GM12878 (cell line): ENCODE measurements at regions of chr17 and their contacts with region 1.

Region 1: DNA sequence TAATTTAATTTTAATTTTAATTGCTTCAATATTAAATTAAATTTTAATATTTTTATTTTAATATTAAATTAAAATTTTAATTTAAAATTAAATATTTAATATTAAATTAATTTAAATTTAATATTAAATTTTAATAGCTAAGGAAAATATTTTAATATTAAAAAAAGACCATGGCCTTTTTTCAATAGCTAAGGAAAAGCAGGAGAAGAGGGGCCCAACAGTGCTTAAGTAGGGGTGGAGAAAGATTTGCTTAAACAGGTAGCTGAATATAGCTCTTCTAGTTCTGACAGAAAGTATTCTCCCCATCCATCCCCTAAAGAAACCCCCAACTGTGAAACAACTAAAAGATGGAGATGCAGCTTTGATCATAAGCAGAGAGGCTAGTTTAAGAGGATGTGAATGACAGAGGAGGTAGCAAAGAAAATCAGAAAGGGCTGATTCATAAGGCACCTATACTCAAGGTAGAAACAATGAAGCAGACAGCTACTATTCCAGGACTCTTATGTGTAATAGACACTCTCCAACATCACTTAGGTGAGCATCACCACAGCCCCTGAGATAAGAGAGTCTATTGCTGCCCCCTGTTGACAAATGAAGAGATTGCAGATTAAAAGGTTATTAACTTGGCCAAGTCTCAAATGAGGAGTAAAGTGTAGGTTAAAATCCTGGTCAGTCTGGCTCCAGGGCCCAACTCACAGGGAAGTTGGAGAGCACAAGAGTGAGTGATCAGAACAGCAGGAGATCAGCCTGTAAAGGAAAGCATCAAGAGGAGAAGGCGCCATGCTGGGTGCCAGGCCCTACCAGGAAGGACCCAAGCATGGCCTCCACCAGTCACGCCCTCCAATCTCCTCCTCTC is 7.8 kb upstream of the RNASEK start:
- DNase-seq: peak; percentile 26
- ATAC-seq: peak; percentile 93
- H3K4me3 ChIP-seq: no peak overlapping the region
- H3K27ac ChIP-seq: no peak overlapping the region
- H3K4me1 ChIP-seq: no peaks in the 10 kb centered on the region
- H3K27me3 ChIP-seq: no peaks in the 10 kb centered on the region
- CTCF ChIP-seq: peak; percentile 56 to 75 (median 73); a peak in 5 of 6 replicates
- EP300 ChIP-seq: no peak
- POLR2A ChIP-seq: no peak
- RAD21 ChIP-seq: peak; percentile 89

Region 2: GRCh38 chr17:6666077-6666521 is 338.5 kb before region 1 on chr17:
- CTCF ChIA-PET with region 1: interaction called, 15 read pairs
- POLR2A ChIA-PET with region 1: interaction called, 4 read pairs
- RAD21 ChIA-PET with region 1: interaction called, 17 read pairs
- SMC1A ChIA-PET with region 1: interaction called, 6 read pairs
- in situ Hi-C with region 1: no loop called
- intact Hi-C with region 1: loop called (anchors 2 kb)
- DNase-seq: no peak
- ATAC-seq: peak; percentile 96
- H3K4me3 ChIP-seq: no peak overlapping the region
- H3K27ac ChIP-seq: no peak overlapping the region
- H3K4me1 ChIP-seq: peaks cover 4% of the 10 kb centered on the region
- H3K27me3 ChIP-seq: no peaks in the 10 kb centered on the region
- CTCF ChIP-seq: peak; percentile 86 to 96 (median 92)
- EP300 ChIP-seq: no peak
- POLR2A ChIP-seq: no peak
- RAD21 ChIP-seq: peak; percentile 98

Region 3: GRCh38 chr17:6919158-6919557 is 85.5 kb before region 1 on chr17:
- CTCF ChIA-PET with region 1: interaction called, 237 read pairs
- POLR2A ChIA-PET with region 1: interaction called, 3 read pairs
- RAD21 ChIA-PET with region 1: interaction called, 61 read pairs
- SMC1A ChIA-PET with region 1: interaction called, 67 read pairs
- in situ Hi-C with region 1: loop called (anchors 5 kb)
- intact Hi-C with region 1: no loop called
- DNase-seq: no peak
- ATAC-seq: no peak
- H3K4me3 ChIP-seq: no peak overlapping the region
- H3K27ac ChIP-seq: no peak overlapping the region
- H3K4me1 ChIP-seq: peaks cover 2% of the 10 kb centered on the region; the same call in 1 of the 2 replicates
- H3K27me3 ChIP-seq: no peaks in the 10 kb centered on the region
- CTCF ChIP-seq: no peak
- EP300 ChIP-seq: no peak
- POLR2A ChIP-seq: no peak
- RAD21 ChIP-seq: no peak

Region 4: DNA sequence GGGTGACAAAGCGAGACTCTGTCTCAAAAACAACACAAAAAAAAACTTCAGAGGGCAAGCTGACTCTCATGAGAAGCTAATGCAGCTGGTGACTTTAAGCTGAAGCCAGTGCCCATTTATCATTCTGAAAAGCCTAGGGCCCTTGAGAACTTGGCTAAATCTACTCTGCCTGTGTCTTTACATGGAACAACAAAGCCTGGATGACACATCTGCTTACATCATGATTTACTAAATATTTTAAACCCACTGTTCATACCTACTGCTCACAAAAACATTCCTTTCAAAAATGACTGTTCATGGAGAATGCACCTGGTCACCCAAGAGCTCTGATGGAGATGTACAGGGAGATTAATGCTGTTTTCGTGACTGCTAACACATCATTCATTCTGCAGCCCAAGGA is 14.8 kb before region 1 on chr17:
- CTCF ChIA-PET with region 1: interaction called, 17 read pairs
- POLR2A ChIA-PET with region 1: no interaction called
- RAD21 ChIA-PET with region 1: no interaction called
- SMC1A ChIA-PET with region 1: interaction called, 5 read pairs
- in situ Hi-C with region 1: no loop called
- intact Hi-C with region 1: no loop called
- DNase-seq: no peak
- ATAC-seq: no peak
- H3K4me3 ChIP-seq: no peak overlapping the region
- H3K27ac ChIP-seq: no peak overlapping the region
- H3K4me1 ChIP-seq: no peaks in the 10 kb centered on the region
- H3K27me3 ChIP-seq: no peaks in the 10 kb centered on the region
- CTCF ChIP-seq: no peak
- EP300 ChIP-seq: no peak
- POLR2A ChIP-seq: no peak
- RAD21 ChIP-seq: no peak

Region 5: GRCh38 chr17:7136266-7136877 is 131.7 kb after region 1 on chr17:
- CTCF ChIA-PET with region 1: interaction called, 12 read pairs
- POLR2A ChIA-PET with region 1: no interaction called
- RAD21 ChIA-PET with region 1: interaction called, 3 read pairs
- SMC1A ChIA-PET with region 1: interaction called, 3 read pairs
- in situ Hi-C with region 1: no loop called
- intact Hi-C with region 1: no loop called
- DNase-seq: peak; percentile 33
- ATAC-seq: no peak
- H3K4me3 ChIP-seq: no peak overlapping the region
- H3K27ac ChIP-seq: no peak overlapping the region
- H3K4me1 ChIP-seq: peaks cover 18% of the 10 kb centered on the region
- H3K27me3 ChIP-seq: peaks cover 0 to 3% of the 10 kb centered on the region in 2 experiments; a peak in 1 of 4 replicates
- CTCF ChIP-seq: peak; percentile 83 to 91 (median 89)
- EP300 ChIP-seq: no peak
- POLR2A ChIP-seq: no peak
- RAD21 ChIP-seq: peak; percentile 98